OCI-LY7 (cell line): ENCODE measurements at regions of chr10 and their contacts with region 1.

Region 1: DNA sequence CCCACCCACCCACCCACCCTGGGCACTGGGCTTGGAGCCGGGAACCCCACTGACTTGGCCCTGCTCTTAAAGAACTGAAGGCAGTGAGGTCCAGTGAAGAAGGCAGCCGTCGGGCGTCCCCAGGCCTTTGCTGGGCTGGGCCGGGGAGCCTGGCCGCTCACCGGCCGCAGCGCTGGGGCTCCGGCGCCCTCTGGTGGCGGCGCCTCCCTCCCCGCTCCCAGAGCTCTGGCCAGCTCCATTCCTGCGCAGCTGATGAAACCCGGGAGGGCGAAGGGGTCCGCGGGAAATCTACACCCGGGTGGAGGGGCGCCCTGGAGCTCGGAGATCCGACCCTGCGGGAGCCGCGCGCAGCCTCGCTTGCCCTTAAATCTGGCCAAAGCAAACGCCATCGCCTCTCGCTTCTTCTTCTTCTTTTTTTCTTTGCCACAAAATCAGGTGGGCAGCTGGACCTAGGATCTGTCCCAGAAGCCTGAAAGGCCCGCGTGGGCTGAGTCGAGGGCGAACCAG is 1.7 kb upstream of the CXCL12 start:
- DNase-seq: peak; percentile 13
- H3K4me3 ChIP-seq: no peak overlapping the region
- H3K27ac ChIP-seq: no peak overlapping the region
- H3K4me1 ChIP-seq: no peaks in the 10 kb centered on the region
- CTCF ChIP-seq: peak; percentile 76

Region 2: GRCh38 chr10:43671656-43672531 is 714.7 kb before region 1 on chr10:
- CTCF ChIA-PET with region 1: no interaction called
- POLR2A ChIA-PET with region 1: no interaction called
- intact Hi-C with region 1: loop called (anchors 1 kb)
- DNase-seq: peak; percentile 67
- H3K4me3 ChIP-seq: no peak overlapping the region
- H3K27ac ChIP-seq: no peak overlapping the region
- H3K4me1 ChIP-seq: no peaks in the 10 kb centered on the region
- CTCF ChIP-seq: peak; percentile 89

Region 3: GRCh38 chr10:43689955-43690771 is 696.4 kb before region 1 on chr10:
- CTCF ChIA-PET with region 1: no interaction called
- POLR2A ChIA-PET with region 1: no interaction called
- intact Hi-C with region 1: loop called (anchors 5 kb)
- DNase-seq: peak; percentile 38
- H3K4me3 ChIP-seq: no peak overlapping the region
- H3K27ac ChIP-seq: no peak overlapping the region
- H3K4me1 ChIP-seq: no peaks in the 10 kb centered on the region
- CTCF ChIP-seq: peak; percentile 82

Region 4: GRCh38 chr10:44478876-44479705 is 92.5 kb after region 1 on chr10:
- CTCF ChIA-PET with region 1: no interaction called
- POLR2A ChIA-PET with region 1: no interaction called
- intact Hi-C with region 1: no loop called
- DNase-seq: no peak
- H3K4me3 ChIP-seq: no peak overlapping the region
- H3K27ac ChIP-seq: no peak overlapping the region
- H3K4me1 ChIP-seq: no peaks in the 10 kb centered on the region
- CTCF ChIP-seq: no peak

Region 5: DNA sequence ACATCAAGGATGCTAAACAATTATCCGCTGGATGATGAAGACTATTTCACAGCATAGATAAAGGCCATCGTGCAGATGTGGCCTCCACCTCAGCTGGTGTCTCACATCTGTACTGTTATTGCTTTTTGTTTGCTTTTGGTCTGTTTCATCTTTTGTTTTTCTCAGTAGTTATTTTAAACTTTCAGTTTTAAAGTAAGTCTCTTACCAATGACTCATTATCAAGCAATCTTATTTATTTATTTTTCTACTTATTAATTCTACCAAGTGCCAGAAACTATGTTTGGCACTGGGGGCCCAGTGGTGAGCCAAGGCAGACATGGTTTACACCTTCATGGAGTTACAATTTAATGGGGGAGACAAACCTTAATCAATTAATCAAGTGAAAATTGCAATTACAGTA is 273.7 kb after region 1 on chr10:
- CTCF ChIA-PET with region 1: no interaction called
- POLR2A ChIA-PET with region 1: no interaction called
- intact Hi-C with region 1: no loop called
- DNase-seq: no peak
- H3K4me3 ChIP-seq: no peak overlapping the region
- H3K27ac ChIP-seq: no peak overlapping the region
- H3K4me1 ChIP-seq: no peaks in the 10 kb centered on the region
- CTCF ChIP-seq: no peak